ENCODE measurements at regions of chr4 and their contacts with region 1.

Region 1: GRCh38 chr4:56155432-56155831 is 206.7 kb downstream of the CEP135 start:
- DNase-seq: no peak

Region 2: DNA sequence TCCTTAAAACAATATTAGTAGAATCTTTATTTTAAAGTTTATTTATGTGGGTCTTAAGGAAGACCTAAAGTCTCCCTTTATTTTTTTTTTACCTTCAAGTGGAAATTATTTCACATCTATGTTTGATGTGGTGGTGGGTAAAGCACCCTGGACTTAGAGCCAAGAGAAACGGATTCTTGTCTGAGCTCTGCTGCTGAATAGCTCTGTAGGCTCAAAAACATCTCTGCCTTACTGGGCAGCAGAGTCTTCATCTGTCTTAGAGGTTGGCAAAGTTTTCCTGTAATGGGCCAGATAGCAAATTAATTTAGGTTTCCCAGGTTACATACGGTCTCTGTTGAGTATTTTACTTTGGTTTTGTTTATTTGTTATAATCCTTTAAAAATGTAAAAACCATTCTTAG is 70.2 kb before region 1 on chr4:
- intact Hi-C with region 1: loop called in 1 of 2 experiments (anchors 2 kb)
- DNase-seq: no peak

Region 3: GRCh38 chr4:56139241-56139827 is 16.1 kb before region 1 on chr4:
- intact Hi-C with region 1: no loop called
- DNase-seq: no peak

Measured in posterior vena cava (tissue), 2 donors.